ENCODE measurements at regions of chr22 and their contacts with region 1.

Region 1: DNA sequence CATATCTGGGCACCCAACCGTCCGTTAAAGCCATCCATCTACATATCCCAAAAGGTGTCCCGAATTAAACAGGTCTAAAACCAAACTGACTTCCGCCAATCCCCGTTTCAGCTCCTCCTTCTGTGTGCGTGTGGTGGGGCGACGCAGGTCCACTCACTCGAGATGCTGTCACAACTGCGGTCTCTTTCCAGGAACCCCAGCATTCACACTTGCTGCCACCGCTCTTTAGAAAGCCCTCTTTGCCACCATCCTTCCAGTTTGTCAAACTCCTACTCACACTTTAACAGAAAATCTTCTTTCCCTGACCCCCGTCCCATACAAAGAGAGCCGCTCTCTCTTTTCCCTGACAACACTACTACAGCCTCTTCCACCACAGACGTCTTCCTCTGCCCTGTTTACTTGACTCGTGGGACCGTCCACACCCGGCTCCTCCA is 467 bp downstream of the ESS2 start:
- DNase-seq: peak in 6 of 9 donors; percentile 8 to 40 (median 26)
- ATAC-seq: no peak
- H3K4me3 ChIP-seq: peak overlapping the region; percentile 83
- H3K4me3 Mint-ChIP-seq: peak overlapping the region; percentile 84 to 99 (median 98)
- H3K27ac ChIP-seq: peak overlapping the region; percentile 93
- H3K27ac Mint-ChIP-seq: peak overlapping the region; percentile 91 to 99 (median 97)
- H3K4me1 ChIP-seq: no peaks in the 10 kb centered on the region
- H3K4me1 Mint-ChIP-seq: peaks cover 8 to 32% (median 18%) of the 10 kb centered on the region in 7 donors
- H3K27me3 ChIP-seq: peaks cover 0 to 1% of the 10 kb centered on the region in 2 donors
- H3K27me3 Mint-ChIP-seq: peaks cover 9 to 33% (median 11%) of the 10 kb centered on the region in 5 donors

Region 2: DNA sequence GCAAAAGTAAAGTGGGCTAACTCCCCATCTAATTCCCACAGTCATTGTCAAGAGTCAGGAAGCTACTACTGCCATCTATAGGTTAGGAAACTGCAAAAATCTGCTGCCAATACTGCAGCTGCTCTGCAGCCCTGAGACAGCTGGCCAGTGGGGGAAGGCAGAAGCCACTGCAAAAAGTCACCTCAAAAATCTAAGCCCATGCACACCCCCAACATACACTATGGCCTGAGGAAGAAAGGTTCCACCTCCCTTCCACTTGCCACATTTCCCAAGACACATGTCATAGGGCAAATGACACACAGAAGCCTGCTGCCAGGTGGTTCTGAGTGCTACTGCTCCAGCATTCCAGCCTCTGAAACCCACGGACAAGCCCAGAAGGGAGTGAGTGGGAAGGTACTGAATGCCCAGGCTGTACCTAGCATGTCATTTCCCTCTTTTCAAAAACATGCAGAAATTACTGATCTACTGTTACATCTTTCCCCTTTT is 58.7 kb before region 1 on chr22:
- CTCF ChIA-PET with region 1: no interaction called
- POLR2A ChIA-PET with region 1: no interaction called
- intact Hi-C with region 1: no loop called
- DNase-seq: no peak
- ATAC-seq: peak; percentile 18
- H3K4me3 ChIP-seq: no peak overlapping the region
- H3K4me3 Mint-ChIP-seq: no peak overlapping the region
- H3K27ac ChIP-seq: no peak overlapping the region
- H3K27ac Mint-ChIP-seq: peak overlapping the region in 4 of 9 donors; percentile 11 to 40 (median 21)
- H3K4me1 ChIP-seq: no peaks in the 10 kb centered on the region
- H3K4me1 Mint-ChIP-seq: peaks cover 7 to 42% (median 37%) of the 10 kb centered on the region in 7 donors
- H3K27me3 ChIP-seq: no peaks in the 10 kb centered on the region
- H3K27me3 Mint-ChIP-seq: no peaks in the 10 kb centered on the region

Region 3: DNA sequence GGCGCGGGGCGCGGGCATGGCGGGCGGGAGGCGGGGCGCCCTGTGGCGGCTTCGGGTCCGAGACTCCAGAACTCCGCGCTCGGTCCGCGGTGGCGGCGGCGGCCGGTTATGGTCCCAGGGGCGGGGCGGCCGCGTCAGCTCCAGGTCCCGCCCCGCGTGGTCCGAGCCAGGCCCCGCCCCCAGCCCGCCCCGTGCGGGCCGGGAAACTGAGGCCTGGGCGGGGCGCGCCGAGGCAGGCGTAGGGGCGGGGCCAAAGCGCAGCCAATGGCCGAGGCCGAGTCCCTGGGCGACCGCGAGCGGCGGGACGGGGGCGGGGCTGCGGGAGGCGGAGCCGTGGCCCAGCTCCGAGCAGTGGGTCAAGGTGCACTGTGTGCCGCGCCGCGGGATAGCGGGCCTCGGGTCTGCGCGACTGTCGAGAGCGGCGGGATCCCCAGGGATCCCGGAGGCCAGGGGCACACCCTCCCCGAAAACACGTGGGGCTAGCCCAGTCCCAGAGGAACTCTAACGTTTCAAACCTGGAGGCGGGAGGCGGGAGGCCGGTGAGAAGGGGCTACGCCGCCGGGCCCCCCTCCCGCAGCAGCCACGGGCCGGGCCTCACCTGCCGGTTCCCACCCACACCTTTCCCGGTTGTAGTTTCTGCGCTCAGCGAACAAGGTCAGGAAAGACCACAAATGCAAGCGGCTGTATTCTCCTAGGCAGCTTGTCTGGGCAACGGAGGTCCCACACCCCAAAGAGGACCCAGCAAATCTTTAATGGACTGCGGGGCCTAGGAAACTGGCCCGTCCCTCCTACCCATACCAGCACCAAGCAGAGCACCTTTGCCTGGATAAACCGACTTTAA is 34.9 kb after region 1 on chr22 and contains the start of gene SLC25A1:
- CTCF ChIA-PET with region 1: no interaction called
- POLR2A ChIA-PET with region 1: interaction called, 5 read pairs
- intact Hi-C with region 1: loop called (anchors 1 kb)
- DNase-seq: peak in 8 of 9 donors; percentile 42 to 96 (median 49)
- ATAC-seq: peak; percentile 82
- H3K4me3 ChIP-seq: peak within 1 kb of the TSS; percentile 58
- H3K4me3 Mint-ChIP-seq: peak within 1 kb of the TSS; percentile 83 to 92 (median 86)
- H3K27ac ChIP-seq: peak within 1 kb of the TSS; percentile 63
- H3K27ac Mint-ChIP-seq: peak within 1 kb of the TSS; percentile 31 to 92 (median 85)
- H3K4me1 ChIP-seq: peaks cover 7 to 9% of the 10 kb centered on the region in 2 donors
- H3K4me1 Mint-ChIP-seq: peaks cover 13 to 28% (median 23%) of the 10 kb centered on the region in 7 donors
- H3K27me3 ChIP-seq: no peaks in the 10 kb centered on the region
- H3K27me3 Mint-ChIP-seq: no peaks in the 10 kb centered on the region
- total RNA-seq, gene SLC25A1: 19.3 to 34.0 (median 30.7) TPM

Region 4: GRCh38 chr22:19291580-19292457 is 147.8 kb after region 1 on chr22 and contains the start of gene CLTCL1:
- CTCF ChIA-PET with region 1: no interaction called
- POLR2A ChIA-PET with region 1: no interaction called
- intact Hi-C with region 1: loop called in 1 of 2 experiments (anchors 2 kb)
- DNase-seq: peak; percentile 38 to 81 (median 67)
- ATAC-seq: peak; percentile 90
- H3K4me3 ChIP-seq: peak within 1 kb of the TSS; percentile 82
- H3K4me3 Mint-ChIP-seq: peak within 1 kb of the TSS; percentile 76 to 93 (median 92)
- H3K27ac ChIP-seq: peak within 1 kb of the TSS; percentile 76
- H3K27ac Mint-ChIP-seq: peak within 1 kb of the TSS; percentile 64 to 93 (median 85)
- H3K4me1 ChIP-seq: peaks cover 6 to 8% of the 10 kb centered on the region in 2 donors
- H3K4me1 Mint-ChIP-seq: peaks cover 13 to 33% (median 25%) of the 10 kb centered on the region in 7 donors
- H3K27me3 ChIP-seq: no peaks in the 10 kb centered on the region
- H3K27me3 Mint-ChIP-seq: peaks cover 5 to 55% (median 23%) of the 10 kb centered on the region in 5 donors
- total RNA-seq, gene CLTCL1: 0.22 to 3.1 (median 1.4) TPM

Region 5: DNA sequence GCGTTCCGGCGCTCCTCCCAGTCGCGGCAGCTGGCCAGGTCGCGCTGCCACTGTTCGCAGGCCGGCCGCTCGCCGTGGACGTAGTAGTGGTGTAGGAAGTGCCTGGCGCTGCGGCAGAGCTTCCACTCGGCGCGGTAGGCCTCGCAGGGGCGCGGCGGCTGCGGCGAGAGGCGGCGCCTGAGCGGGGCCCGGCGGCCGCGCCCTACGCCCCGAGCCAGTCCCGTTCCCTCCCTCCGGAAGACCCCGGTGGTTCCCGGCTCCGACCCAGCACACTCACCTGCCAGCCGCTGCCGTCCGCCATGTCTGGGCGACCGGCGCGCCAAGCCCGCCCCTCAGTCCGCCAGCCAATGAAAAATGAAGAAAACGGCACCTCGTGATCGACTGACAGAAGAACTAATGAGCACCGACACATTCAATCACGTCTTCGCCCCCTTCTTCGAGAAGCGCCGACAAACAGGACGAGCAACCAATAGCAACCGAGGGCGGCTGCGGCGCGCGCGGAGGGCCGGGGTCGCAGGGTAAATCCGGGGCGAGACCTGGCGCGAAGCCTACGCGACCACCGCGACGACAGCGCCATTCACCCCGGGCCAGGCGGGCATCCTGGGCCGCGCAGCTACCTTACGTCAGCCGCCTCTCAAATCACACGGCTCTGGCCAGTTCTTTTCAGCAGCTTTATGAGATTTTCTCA is 303.5 kb after region 1 on chr22 and contains the start of gene C22orf39:
- CTCF ChIA-PET with region 1: no interaction called
- POLR2A ChIA-PET with region 1: interaction called, 4 read pairs
- intact Hi-C with region 1: loop called in 1 of 2 experiments (anchors 1 kb)
- DNase-seq: peak; percentile 69 to 93 (median 90)
- ATAC-seq: peak; percentile 94
- H3K4me3 ChIP-seq: peak within 1 kb of the TSS; percentile 65
- H3K4me3 Mint-ChIP-seq: peak within 1 kb of the TSS; percentile 84 to 99 (median 92)
- H3K27ac ChIP-seq: peak within 1 kb of the TSS; percentile 81
- H3K27ac Mint-ChIP-seq: peak within 1 kb of the TSS; percentile 84 to 97 (median 94)
- H3K4me1 ChIP-seq: peaks cover 18 to 26% of the 10 kb centered on the region in 2 donors
- H3K4me1 Mint-ChIP-seq: peaks cover 21 to 61% (median 48%) of the 10 kb centered on the region in 7 donors
- H3K27me3 ChIP-seq: no peaks in the 10 kb centered on the region
- H3K27me3 Mint-ChIP-seq: no peaks in the 10 kb centered on the region
- total RNA-seq, gene C22orf39: 34.2 to 44.9 (median 36.8) TPM

Measured in naive thymus-derived CD4-positive, alpha-beta T cell (primary cell).